H1 (cell line): ENCODE measurements at regions of chr6 and their contacts with region 1.

Region 1: GRCh38 chr6:166775180-166776081 is 148.4 kb upstream of the RPS6KA2 start:
- DNase-seq: peak in 1 of 2 experiments; percentile 67
- H3K4me3 ChIP-seq: no peak overlapping the region
- H3K27ac ChIP-seq: no peak overlapping the region
- H3K4me1 ChIP-seq: peaks cover 2 to 12% (median 8%) of the 10 kb centered on the region in 4 experiments; a peak in 5 of 7 replicates
- H3K27me3 ChIP-seq: no peaks in the 10 kb centered on the region
- CTCF ChIP-seq: peak; percentile 74 to 91 (median 79)
- EP300 ChIP-seq: no peak
- POLR2A ChIP-seq: no peak
- RAD21 ChIP-seq: peak; percentile 90 to 91

Region 2: DNA sequence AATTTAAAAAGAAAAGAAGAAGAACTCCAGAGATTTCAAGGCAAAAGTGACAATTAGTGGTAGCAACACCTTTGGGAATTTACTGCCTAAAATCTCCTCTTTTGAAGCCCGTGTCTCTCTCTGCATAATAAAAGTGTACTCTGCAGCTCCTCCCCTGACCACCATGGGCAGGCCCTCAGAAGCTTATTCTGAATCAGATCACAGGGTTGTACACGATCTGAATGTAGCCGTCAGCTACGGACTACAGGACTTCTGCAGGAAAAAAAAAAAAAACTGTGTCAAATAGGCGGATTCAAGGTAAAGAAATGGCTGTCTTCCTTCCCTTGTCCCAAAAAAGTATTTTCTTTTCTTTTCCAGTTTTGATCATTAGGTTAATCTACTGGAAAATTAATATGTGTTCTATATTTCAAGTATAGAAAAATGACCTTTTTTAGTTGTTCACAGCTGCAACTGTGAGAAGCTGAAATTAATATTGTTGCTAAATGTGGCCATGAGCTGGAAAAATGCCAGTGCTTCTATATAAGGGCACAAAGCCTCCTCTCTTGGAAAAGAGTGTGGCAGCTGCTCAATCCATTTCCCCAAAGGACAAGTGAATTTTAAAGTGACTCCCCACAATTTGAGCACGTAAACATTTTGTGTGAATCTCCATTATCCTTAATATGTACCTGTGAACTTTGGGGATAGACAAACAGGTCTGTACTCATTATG is 1863.4 kb before region 1 on chr6:
- CTCF ChIA-PET with region 1: no interaction called
- POLR2A ChIA-PET with region 1: no interaction called
- DNase-seq: no peak
- H3K4me3 ChIP-seq: no peak overlapping the region
- H3K27ac ChIP-seq: no peak overlapping the region
- H3K4me1 ChIP-seq: peaks cover 0 to 5% (median 0%) of the 10 kb centered on the region in 4 experiments; a peak in 1 of 7 replicates
- H3K27me3 ChIP-seq: no peaks in the 10 kb centered on the region; a peak in 1 of 7 replicates
- CTCF ChIP-seq: no peak
- EP300 ChIP-seq: no peak
- POLR2A ChIP-seq: no peak
- RAD21 ChIP-seq: no peak

Region 3: DNA sequence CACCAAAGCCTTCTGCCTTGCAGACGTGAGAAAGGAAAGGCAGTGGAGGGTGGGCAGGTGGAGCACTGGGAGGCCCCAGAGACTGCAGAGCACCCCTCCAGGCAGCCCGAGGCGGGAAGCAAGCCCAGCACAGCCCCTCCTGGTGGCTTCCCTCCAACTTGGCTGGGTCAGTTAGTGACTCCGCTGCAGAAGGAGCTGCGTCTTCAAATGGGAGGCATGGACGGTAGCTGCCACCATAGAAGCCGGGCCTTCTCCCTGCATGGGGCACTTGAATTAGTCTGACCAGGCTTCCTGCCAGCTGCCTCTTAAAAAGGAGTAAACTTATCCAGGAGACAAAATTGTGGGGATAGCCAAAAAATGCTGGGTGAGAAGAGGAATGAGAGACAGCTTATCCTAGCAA is 60.4 kb before region 1 on chr6:
- CTCF ChIA-PET with region 1: interaction called, 75 read pairs
- POLR2A ChIA-PET with region 1: no interaction called
- DNase-seq: no peak
- H3K4me3 ChIP-seq: no peak overlapping the region
- H3K27ac ChIP-seq: no peak overlapping the region
- H3K4me1 ChIP-seq: no peaks in the 10 kb centered on the region
- H3K27me3 ChIP-seq: no peaks in the 10 kb centered on the region
- CTCF ChIP-seq: peak; percentile 42 to 55 (median 45)
- EP300 ChIP-seq: no peak
- POLR2A ChIP-seq: no peak
- RAD21 ChIP-seq: peak; percentile 8 to 46; a peak in 2 of 4 replicates

Region 4: GRCh38 chr6:166757232-166758135 is 17.9 kb before region 1 on chr6:
- CTCF ChIA-PET with region 1: interaction called, 83 read pairs
- POLR2A ChIA-PET with region 1: no interaction called
- DNase-seq: no peak
- H3K4me3 ChIP-seq: 0 out of 8 replicates have a peak overlapping the region, but pooled peaks of 1 of the 4 experiments have one; percentile 19
- H3K27ac ChIP-seq: no peak overlapping the region
- H3K4me1 ChIP-seq: peaks cover 3 to 26% (median 16%) of the 10 kb centered on the region in 4 experiments
- H3K27me3 ChIP-seq: no peaks in the 10 kb centered on the region; a peak in 1 of 7 replicates
- CTCF ChIP-seq: no peak
- EP300 ChIP-seq: no peak
- POLR2A ChIP-seq: no peak
- RAD21 ChIP-seq: no peak

Region 5: DNA sequence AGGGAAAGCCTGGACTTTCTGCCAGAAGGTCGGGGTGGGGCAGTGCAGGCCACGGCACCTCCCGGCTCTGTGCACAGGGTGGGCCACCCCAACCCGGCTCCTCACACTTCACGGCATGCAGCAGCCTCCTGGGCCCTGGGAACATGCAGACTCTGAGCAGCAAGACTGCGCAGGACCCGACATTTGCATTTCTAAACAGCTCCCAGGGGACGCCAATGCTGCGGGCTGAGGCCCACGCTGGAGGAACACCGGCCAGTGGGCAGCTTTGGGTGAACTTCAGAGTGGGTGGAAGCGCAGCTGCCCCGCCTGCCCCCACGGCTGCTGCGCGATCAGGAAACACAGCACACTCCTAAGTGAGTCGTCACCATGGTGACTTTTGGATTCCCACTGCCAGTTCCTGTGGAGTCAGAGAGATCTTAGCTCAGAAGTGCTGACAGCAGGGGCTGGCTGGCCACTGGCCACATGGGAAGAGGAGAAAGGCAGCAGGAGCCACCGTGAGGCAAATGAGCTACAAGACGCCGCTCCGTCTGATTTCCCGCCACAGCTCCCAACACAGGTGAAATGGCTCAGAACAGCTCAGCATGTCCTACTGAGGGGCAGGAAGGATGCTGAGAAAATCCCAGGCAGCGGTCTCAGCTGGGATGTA is 128.8 kb after region 1 on chr6:
- CTCF ChIA-PET with region 1: interaction called, 17 read pairs
- POLR2A ChIA-PET with region 1: no interaction called
- DNase-seq: peak in 1 of 2 experiments; percentile 47
- H3K4me3 ChIP-seq: no peak overlapping the region
- H3K27ac ChIP-seq: no peak overlapping the region
- H3K4me1 ChIP-seq: peaks cover 0 to 9% (median 6%) of the 10 kb centered on the region in 4 experiments; a peak in 6 of 7 replicates
- H3K27me3 ChIP-seq: no peaks in the 10 kb centered on the region; a peak in 1 of 7 replicates
- CTCF ChIP-seq: no peak
- EP300 ChIP-seq: no peak
- POLR2A ChIP-seq: no peak
- RAD21 ChIP-seq: peak; percentile 6 to 23; a peak in 1 of 4 replicates

Region 6: GRCh38 chr6:166950443-166950821 is 175.0 kb after region 1 on chr6:
- CTCF ChIA-PET with region 1: interaction called, 40 read pairs
- POLR2A ChIA-PET with region 1: interaction called, 3 read pairs
- DNase-seq: no peak
- H3K4me3 ChIP-seq: no peak overlapping the region
- H3K27ac ChIP-seq: no peak overlapping the region
- H3K4me1 ChIP-seq: peaks cover under 1 to 9% (median 4%) of the 10 kb centered on the region in 4 experiments; a peak in 6 of 7 replicates
- H3K27me3 ChIP-seq: peaks cover 0 to 1% (median 0%) of the 10 kb centered on the region in 4 experiments; a peak in 3 of 7 replicates
- CTCF ChIP-seq: no peak
- EP300 ChIP-seq: no peak
- POLR2A ChIP-seq: no peak
- RAD21 ChIP-seq: no peak

Region 7: GRCh38 chr6:167141667-167142432 is 366.4 kb after region 1 on chr6:
- CTCF ChIA-PET with region 1: interaction called, 16 read pairs
- POLR2A ChIA-PET with region 1: no interaction called
- DNase-seq: peak in 1 of 2 experiments; percentile 79
- H3K4me3 ChIP-seq: no peak overlapping the region
- H3K27ac ChIP-seq: no peak overlapping the region
- H3K4me1 ChIP-seq: peaks cover 3 to 16% (median 12%) of the 10 kb centered on the region in 4 experiments
- H3K27me3 ChIP-seq: no peaks in the 10 kb centered on the region; a peak in 2 of 7 replicates
- CTCF ChIP-seq: peak; percentile 90 to 94 (median 92)
- EP300 ChIP-seq: peak in 1 of 2 experiments; percentile 29; a peak in 1 of 3 replicates
- POLR2A ChIP-seq: no peak
- RAD21 ChIP-seq: peak; percentile 98 to 99